ENCODE measurements at regions of chr4 and their contacts with region 1.

Region 1: GRCh38 chr4:176526704-176527103 is 206.9 kb downstream of the SPCS3 start:
- DNase-seq: no peak
- ATAC-seq: no peak
- H3K4me3 ChIP-seq: no peak overlapping the region
- H3K4me3 Mint-ChIP-seq: no peak overlapping the region
- H3K27ac ChIP-seq: no peak overlapping the region
- H3K27ac Mint-ChIP-seq: no peak overlapping the region
- H3K4me1 ChIP-seq: no peaks in the 10 kb centered on the region
- H3K4me1 Mint-ChIP-seq: no peaks in the 10 kb centered on the region
- H3K27me3 ChIP-seq: no peaks in the 10 kb centered on the region
- H3K27me3 Mint-ChIP-seq: no peaks in the 10 kb centered on the region
- CTCF ChIP-seq: no peak

Region 2: GRCh38 chr4:176400816-176401461 is 125.8 kb before region 1 on chr4:
- CTCF ChIA-PET with region 1: no interaction called
- POLR2A ChIA-PET with region 1: no interaction called
- intact Hi-C with region 1: no loop called
- DNase-seq: no peak
- ATAC-seq: no peak
- H3K4me3 ChIP-seq: no peak overlapping the region
- H3K4me3 Mint-ChIP-seq: no peak overlapping the region
- H3K27ac ChIP-seq: no peak overlapping the region
- H3K27ac Mint-ChIP-seq: no peak overlapping the region
- H3K4me1 ChIP-seq: no peaks in the 10 kb centered on the region
- H3K4me1 Mint-ChIP-seq: no peaks in the 10 kb centered on the region
- H3K27me3 ChIP-seq: no peaks in the 10 kb centered on the region
- H3K27me3 Mint-ChIP-seq: peaks cover 4% of the 10 kb centered on the region
- CTCF ChIP-seq: no peak

Region 3: GRCh38 chr4:176548571-176548970 is 21.9 kb after region 1 on chr4:
- CTCF ChIA-PET with region 1: no interaction called
- POLR2A ChIA-PET with region 1: no interaction called
- intact Hi-C with region 1: no loop called
- DNase-seq: no peak
- ATAC-seq: no peak
- H3K4me3 ChIP-seq: no peak overlapping the region
- H3K4me3 Mint-ChIP-seq: no peak overlapping the region
- H3K27ac ChIP-seq: no peak overlapping the region
- H3K27ac Mint-ChIP-seq: no peak overlapping the region
- H3K4me1 ChIP-seq: no peaks in the 10 kb centered on the region
- H3K4me1 Mint-ChIP-seq: no peaks in the 10 kb centered on the region
- H3K27me3 ChIP-seq: no peaks in the 10 kb centered on the region
- H3K27me3 Mint-ChIP-seq: no peaks in the 10 kb centered on the region
- CTCF ChIP-seq: no peak

Region 4: GRCh38 chr4:177692907-177693306 is 1166.2 kb after region 1 on chr4:
- CTCF ChIA-PET with region 1: no interaction called
- POLR2A ChIA-PET with region 1: no interaction called
- intact Hi-C with region 1: loop called in 1 of 2 experiments (anchors 5 kb)
- DNase-seq: no peak
- ATAC-seq: no peak
- H3K4me3 ChIP-seq: no peak overlapping the region
- H3K4me3 Mint-ChIP-seq: no peak overlapping the region
- H3K27ac ChIP-seq: no peak overlapping the region
- H3K27ac Mint-ChIP-seq: no peak overlapping the region
- H3K4me1 ChIP-seq: no peaks in the 10 kb centered on the region
- H3K4me1 Mint-ChIP-seq: no peaks in the 10 kb centered on the region
- H3K27me3 ChIP-seq: no peaks in the 10 kb centered on the region
- H3K27me3 Mint-ChIP-seq: no peaks in the 10 kb centered on the region
- CTCF ChIP-seq: no peak